CD8-positive, alpha-beta T cell (primary cell): ENCODE measurements at regions of chr18 and their contacts with region 1.

Region 1: GRCh38 chr18:59070181-59070912 is 69.3 kb upstream of the SEC11C start:
- DNase-seq: peak; percentile 48 to 82 (median 70)
- ATAC-seq: peak; percentile 78
- H3K4me3 ChIP-seq: no peak overlapping the region
- H3K4me3 Mint-ChIP-seq: no peak overlapping the region
- H3K27ac ChIP-seq: no peak overlapping the region
- H3K27ac Mint-ChIP-seq: no peak overlapping the region
- H3K4me1 ChIP-seq: no peaks in the 10 kb centered on the region
- H3K4me1 Mint-ChIP-seq: no peaks in the 10 kb centered on the region
- H3K27me3 ChIP-seq: no peaks in the 10 kb centered on the region
- H3K27me3 Mint-ChIP-seq: peaks cover 2% of the 10 kb centered on the region
- CTCF ChIP-seq: peak; percentile 76

Region 2: GRCh38 chr18:58776084-58776483 is 294.3 kb before region 1 on chr18:
- CTCF ChIA-PET with region 1: interaction called, 71 read pairs
- POLR2A ChIA-PET with region 1: interaction called, 3 read pairs
- intact Hi-C with region 1: loop called in 1 of 2 experiments (anchors 1 kb)
- DNase-seq: no peak
- ATAC-seq: no peak
- H3K4me3 ChIP-seq: no peak overlapping the region
- H3K4me3 Mint-ChIP-seq: no peak overlapping the region
- H3K27ac ChIP-seq: no peak overlapping the region
- H3K27ac Mint-ChIP-seq: no peak overlapping the region
- H3K4me1 ChIP-seq: no peaks in the 10 kb centered on the region
- H3K4me1 Mint-ChIP-seq: no peaks in the 10 kb centered on the region
- H3K27me3 ChIP-seq: peaks cover 0 to 2% of the 10 kb centered on the region in 2 experiments
- H3K27me3 Mint-ChIP-seq: peaks cover 27% of the 10 kb centered on the region
- CTCF ChIP-seq: no peak

Region 3: GRCh38 chr18:58781627-58782194 is 288.6 kb before region 1 on chr18:
- CTCF ChIA-PET with region 1: interaction called, 71 read pairs
- POLR2A ChIA-PET with region 1: no interaction called
- intact Hi-C with region 1: loop called in 1 of 2 experiments (anchors 1 kb)
- DNase-seq: peak; percentile 25 to 76 (median 59)
- ATAC-seq: peak; percentile 61
- H3K4me3 ChIP-seq: no peak overlapping the region
- H3K4me3 Mint-ChIP-seq: no peak overlapping the region
- H3K27ac ChIP-seq: no peak overlapping the region
- H3K27ac Mint-ChIP-seq: no peak overlapping the region
- H3K4me1 ChIP-seq: no peaks in the 10 kb centered on the region
- H3K4me1 Mint-ChIP-seq: no peaks in the 10 kb centered on the region
- H3K27me3 ChIP-seq: peaks cover 0 to 2% of the 10 kb centered on the region in 2 experiments
- H3K27me3 Mint-ChIP-seq: peaks cover 32% of the 10 kb centered on the region
- CTCF ChIP-seq: peak; percentile 76

Region 4: GRCh38 chr18:59056706-59057492 is 13.4 kb before region 1 on chr18:
- CTCF ChIA-PET with region 1: interaction called, 15 read pairs
- POLR2A ChIA-PET with region 1: no interaction called
- intact Hi-C with region 1: no loop called
- DNase-seq: peak in 4 of 9 experiments; percentile 33 to 55 (median 48)
- ATAC-seq: no peak
- H3K4me3 ChIP-seq: no peak overlapping the region
- H3K4me3 Mint-ChIP-seq: no peak overlapping the region
- H3K27ac ChIP-seq: no peak overlapping the region
- H3K27ac Mint-ChIP-seq: no peak overlapping the region
- H3K4me1 ChIP-seq: no peaks in the 10 kb centered on the region
- H3K4me1 Mint-ChIP-seq: no peaks in the 10 kb centered on the region
- H3K27me3 ChIP-seq: no peaks in the 10 kb centered on the region
- H3K27me3 Mint-ChIP-seq: peaks cover 25% of the 10 kb centered on the region
- CTCF ChIP-seq: peak; percentile 40

Region 5: DNA sequence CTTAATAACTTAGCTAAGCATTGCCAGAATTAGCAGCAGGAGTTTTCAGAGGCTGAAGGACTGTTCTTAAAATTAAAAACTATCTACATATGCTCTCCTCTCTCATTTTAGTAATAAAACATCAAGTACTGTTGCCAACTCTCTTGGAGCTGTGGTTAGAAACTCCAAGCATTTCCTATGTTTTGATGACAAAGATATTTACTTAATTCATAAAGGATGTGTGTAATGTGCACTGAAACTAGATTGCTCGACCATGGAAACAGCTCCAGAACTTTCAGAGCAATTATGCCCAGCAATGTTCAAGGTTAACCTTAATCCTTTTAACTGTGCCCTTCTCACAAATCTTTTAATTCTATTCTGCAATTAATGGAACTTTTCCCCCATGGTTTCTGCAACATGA is 158.0 kb after region 1 on chr18:
- CTCF ChIA-PET with region 1: no interaction called
- POLR2A ChIA-PET with region 1: no interaction called
- intact Hi-C with region 1: no loop called
- DNase-seq: no peak
- ATAC-seq: no peak
- H3K4me3 ChIP-seq: no peak overlapping the region
- H3K4me3 Mint-ChIP-seq: no peak overlapping the region
- H3K27ac ChIP-seq: no peak overlapping the region
- H3K27ac Mint-ChIP-seq: no peak overlapping the region
- H3K4me1 ChIP-seq: no peaks in the 10 kb centered on the region
- H3K4me1 Mint-ChIP-seq: no peaks in the 10 kb centered on the region
- H3K27me3 ChIP-seq: peaks cover 0 to 3% of the 10 kb centered on the region in 2 experiments
- H3K27me3 Mint-ChIP-seq: peaks cover 36% of the 10 kb centered on the region
- CTCF ChIP-seq: no peak